Right ventricle myocardium inferior (tissue), 1 donor: ENCODE measurements at regions of chr3 and their contacts with region 1.

Region 1: GRCh38 chr3:190811775-190812480 is 50.6 kb downstream of the GMNC start:
- DNase-seq: no peak
- ATAC-seq: no peak

Region 2: DNA sequence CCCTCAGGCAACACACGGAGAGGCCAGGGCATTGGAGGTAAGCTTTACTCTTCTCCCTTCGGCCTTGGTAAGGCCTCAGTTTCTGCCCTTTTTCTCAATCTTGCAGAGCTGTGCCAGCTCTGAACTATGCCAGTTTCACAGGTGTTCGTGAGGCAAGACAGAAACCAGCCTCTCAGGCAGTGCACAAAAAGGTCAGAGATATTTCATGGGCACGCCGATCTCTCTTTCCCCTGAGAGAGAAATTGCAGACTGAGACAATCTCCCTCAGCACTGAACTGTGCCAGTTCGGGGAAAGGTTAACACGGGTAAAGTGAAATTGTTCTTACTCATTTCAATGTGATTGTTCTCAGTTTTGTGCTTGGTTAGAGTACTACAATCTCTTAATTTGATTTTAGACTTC is 38.0 kb before region 1 on chr3:
- intact Hi-C with region 1: loop called (anchors 2 kb)
- DNase-seq: no peak
- ATAC-seq: peak; percentile 94

Region 3: DNA sequence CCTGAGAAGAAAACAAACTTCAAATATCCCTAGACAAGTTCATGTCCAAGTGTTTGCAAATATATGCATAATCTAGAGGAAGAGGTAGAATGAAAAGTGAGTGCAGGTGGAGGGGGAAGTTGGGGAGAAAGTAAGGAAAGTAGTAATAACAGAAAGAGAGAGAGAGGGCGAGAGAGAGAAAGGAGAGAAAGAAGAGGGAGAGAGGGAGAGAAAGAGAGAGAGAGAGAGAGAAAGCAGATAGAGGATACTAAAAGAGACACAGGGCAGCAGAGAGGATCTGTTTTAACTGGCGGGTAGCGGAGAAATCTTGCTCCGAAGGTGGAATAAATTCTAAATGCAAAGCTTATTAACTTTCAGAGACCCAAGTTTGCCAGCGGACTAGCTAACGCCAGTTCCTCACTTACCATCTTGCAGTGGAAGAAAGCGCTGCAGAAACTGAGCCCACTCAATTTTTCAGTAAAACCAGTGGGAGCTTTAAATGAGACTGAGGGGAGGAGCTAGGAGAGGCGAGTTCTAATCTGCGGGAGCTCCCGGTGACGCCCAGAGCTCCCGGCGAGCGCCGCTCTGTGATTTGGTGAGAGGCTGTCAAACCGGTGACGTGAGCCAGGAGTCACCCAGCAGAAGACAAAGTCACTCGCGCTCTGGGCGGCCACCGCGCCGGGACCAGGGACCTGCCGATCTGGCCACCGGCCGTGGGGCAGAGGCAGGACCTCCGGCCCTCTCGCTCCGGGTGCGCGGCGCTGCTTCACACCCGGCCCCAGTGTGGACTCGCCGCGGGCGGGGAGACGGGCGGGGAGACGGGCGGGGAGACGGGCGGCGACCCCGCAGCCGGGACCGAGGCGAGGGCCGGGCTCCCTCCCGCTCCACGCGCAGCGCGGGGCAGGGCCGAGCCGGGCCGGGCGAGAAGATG is 50.5 kb after region 1 on chr3 and contains the start of gene GMNC:
- intact Hi-C with region 1: loop called (anchors 2 kb)
- DNase-seq: peak; percentile 92
- ATAC-seq: peak; percentile 96
- total RNA-seq, gene GMNC: 4.4 TPM

Region 4: GRCh38 chr3:191051037-191051436 is 239.1 kb after region 1 on chr3:
- intact Hi-C with region 1: loop called (anchors 2 kb)
- DNase-seq: no peak
- ATAC-seq: no peak